ENCODE measurements at regions of chr1 and their contacts with region 1.

Region 1: GRCh38 chr1:204263254-204263910 is 49.6 kb upstream of the GOLT1A start:
- DNase-seq: no peak
- ATAC-seq: no peak
- H3K4me3 ChIP-seq: no peak overlapping the region
- H3K27ac ChIP-seq: no peak overlapping the region
- H3K4me1 ChIP-seq: peaks cover 47% of the 10 kb centered on the region
- H3K27me3 ChIP-seq: no peaks in the 10 kb centered on the region
- CTCF ChIP-seq: no peak
- EP300 ChIP-seq: no peak
- POLR2A ChIP-seq: no peak
- RAD21 ChIP-seq: no peak

Region 2: GRCh38 chr1:204288021-204288588 is 24.7 kb after region 1 on chr1:
- CTCF ChIA-PET with region 1: no interaction called
- POLR2A ChIA-PET with region 1: no interaction called
- in situ Hi-C with region 1: no loop called
- intact Hi-C with region 1: loop called (anchors 1 kb)
- DNase-seq: peak; percentile 79
- ATAC-seq: peak; percentile 96
- H3K4me3 ChIP-seq: peak overlapping the region; percentile 8 to 57 (median 26); a peak in 5 of 6 replicates
- H3K27ac ChIP-seq: peak overlapping the region; percentile 6
- H3K4me1 ChIP-seq: peaks cover 39% of the 10 kb centered on the region
- H3K27me3 ChIP-seq: no peaks in the 10 kb centered on the region
- CTCF ChIP-seq: no peak
- EP300 ChIP-seq: peak in 1 of 2 experiments; percentile 20; a peak in 1 of 4 replicates
- POLR2A ChIP-seq: peak; percentile 67 to 84
- RAD21 ChIP-seq: no peak